ENCODE measurements at regions of chr2 and their contacts with region 1.

Region 1: GRCh38 chr2:121071034-121071504 is 213.9 kb downstream of the TFCP2L1 start:
- DNase-seq: peak in 1 of 2 donors; percentile 76
- H3K4me3 ChIP-seq: no peak overlapping the region
- H3K27ac ChIP-seq: no peak overlapping the region
- H3K4me1 ChIP-seq: no peaks in the 10 kb centered on the region
- H3K27me3 ChIP-seq: peaks cover 3% of the 10 kb centered on the region
- CTCF ChIP-seq: peak; percentile 82 to 98 (median 95)

Region 2: GRCh38 chr2:120693121-120693520 is 377.9 kb before region 1 on chr2:
- intact Hi-C with region 1: loop called (anchors 1 kb)
- DNase-seq: no peak
- H3K4me3 ChIP-seq: no peak overlapping the region
- H3K27ac ChIP-seq: no peak overlapping the region
- H3K4me1 ChIP-seq: no peaks in the 10 kb centered on the region
- H3K27me3 ChIP-seq: no peaks in the 10 kb centered on the region
- CTCF ChIP-seq: no peak

Region 3: GRCh38 chr2:120735746-120736170 is 335.3 kb before region 1 on chr2 and contains the start of gene GLI2:
- intact Hi-C with region 1: loop called (anchors 1 kb)
- DNase-seq: peak in 1 of 2 donors; percentile 82
- H3K4me3 ChIP-seq: peak within 1 kb of the TSS; percentile 51 to 67
- H3K27ac ChIP-seq: peak within 1 kb of the TSS; percentile 74 to 85
- H3K4me1 ChIP-seq: peaks cover 0 to 11% of the 10 kb centered on the region in 2 donors
- H3K27me3 ChIP-seq: no peaks in the 10 kb centered on the region
- CTCF ChIP-seq: peak; percentile 63 to 73 (median 72)
- total RNA-seq, gene GLI2: 23.1 TPM

Region 4: DNA sequence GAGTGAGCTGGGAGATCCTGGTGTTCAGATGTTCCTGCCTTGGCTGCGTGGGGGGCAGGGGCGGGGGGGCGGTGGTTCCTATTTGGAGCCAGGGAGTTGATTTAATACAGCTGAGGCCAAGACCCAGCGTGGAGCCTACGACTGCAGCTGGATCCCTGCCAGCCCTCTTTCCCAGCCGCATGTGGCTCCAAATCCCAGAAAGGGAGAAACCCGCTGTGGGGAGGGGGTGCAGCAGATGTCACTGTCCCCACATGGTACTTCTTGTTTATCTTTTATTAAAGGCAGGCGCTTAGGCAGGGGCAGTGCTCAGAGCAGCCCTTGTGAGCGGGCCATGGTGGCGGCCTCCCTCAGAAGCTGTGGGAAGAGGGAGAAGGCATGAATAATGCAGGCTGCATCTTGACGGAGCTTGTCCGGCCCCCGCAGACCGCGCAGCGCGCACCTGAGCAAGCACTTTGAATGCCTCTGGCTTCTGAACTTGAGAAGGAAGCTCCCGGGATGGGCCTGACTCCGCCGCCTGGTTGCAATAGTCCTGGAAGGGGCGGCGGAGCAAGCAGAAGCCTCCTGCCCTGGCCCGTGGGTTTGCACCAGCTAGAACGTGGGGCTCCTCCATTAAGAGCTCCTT is 223.3 kb before region 1 on chr2:
- intact Hi-C with region 1: loop called (anchors 10 kb)
- DNase-seq: no peak
- H3K4me3 ChIP-seq: no peak overlapping the region
- H3K27ac ChIP-seq: no peak overlapping the region
- H3K4me1 ChIP-seq: no peaks in the 10 kb centered on the region
- H3K27me3 ChIP-seq: no peaks in the 10 kb centered on the region
- CTCF ChIP-seq: no peak

Measured in ascending aorta (tissue), 2 donors.